ENCODE measurements at regions of chr1 and their contacts with region 1.

Region 1: GRCh38 chr1:150321826-150322166 is 463 bp downstream of the PRPF3 start:
- DNase-seq: no peak
- H3K4me3 ChIP-seq: peak overlapping the region; percentile 68 to 88 (median 68)
- H3K27ac ChIP-seq: peak overlapping the region; percentile 62
- H3K4me1 ChIP-seq: peaks cover 7% of the 10 kb centered on the region
- H3K27me3 ChIP-seq: no peaks in the 10 kb centered on the region
- CTCF ChIP-seq: no peak
- POLR2A ChIP-seq: no peak

Region 2: DNA sequence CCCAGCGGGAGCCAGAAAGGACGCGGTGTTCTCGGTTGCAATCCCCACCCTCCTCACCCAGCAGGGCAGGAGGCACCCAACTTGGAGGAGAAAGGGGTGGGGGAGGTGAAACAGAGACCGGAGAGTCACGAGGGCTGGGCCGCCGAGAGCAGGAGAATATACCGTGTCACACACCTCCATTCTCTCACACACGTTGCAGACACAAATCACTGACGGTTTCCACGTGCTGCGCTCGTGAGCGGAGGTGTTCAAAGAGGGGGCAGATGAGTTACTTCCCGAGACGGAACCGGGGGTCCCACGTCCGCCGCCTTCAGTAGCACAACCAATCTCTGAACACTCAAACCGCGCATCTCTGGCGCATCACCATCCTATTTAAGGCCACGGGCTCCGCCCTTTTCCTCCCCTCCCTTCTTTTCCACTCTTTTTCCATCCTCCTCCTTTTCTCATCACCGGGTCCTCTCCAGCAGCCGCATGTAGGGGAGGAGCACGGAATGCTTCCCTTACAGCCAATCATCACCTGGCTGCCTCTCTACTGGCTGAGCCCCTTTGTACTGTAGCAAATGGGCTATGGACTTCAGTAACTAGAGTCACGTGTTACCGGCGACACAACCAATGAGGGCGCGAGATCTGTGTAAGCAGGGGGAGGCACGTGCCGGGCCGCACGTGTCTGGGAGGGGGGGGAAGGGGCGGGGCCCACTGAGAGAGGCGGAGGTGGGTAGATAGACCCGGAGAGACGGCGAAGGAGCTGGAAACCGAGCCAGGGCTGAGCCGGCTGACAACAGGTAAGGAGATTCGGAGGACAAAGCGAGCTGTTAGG is 39.8 kb before region 1 on chr1 and contains the start of gene CIART:
- CTCF ChIA-PET with region 1: interaction called, 4 read pairs
- POLR2A ChIA-PET with region 1: no interaction called
- dilution Hi-C with region 1: no loop called
- intact Hi-C with region 1: loop called (anchors 1 kb)
- DNase-seq: peak; percentile 91
- H3K4me3 ChIP-seq: peak within 1 kb of the TSS; percentile 20 to 40 (median 29)
- H3K27ac ChIP-seq: no peak within 1 kb of the TSS
- H3K4me1 ChIP-seq: peaks cover 10% of the 10 kb centered on the region
- H3K27me3 ChIP-seq: peaks cover 0 to 8% of the 10 kb centered on the region in 2 experiments
- CTCF ChIP-seq: no peak
- POLR2A ChIP-seq: peak; percentile 44
- total RNA-seq, gene CIART: 1.0 and 2.4 TPM in 2 replicates

Region 3: DNA sequence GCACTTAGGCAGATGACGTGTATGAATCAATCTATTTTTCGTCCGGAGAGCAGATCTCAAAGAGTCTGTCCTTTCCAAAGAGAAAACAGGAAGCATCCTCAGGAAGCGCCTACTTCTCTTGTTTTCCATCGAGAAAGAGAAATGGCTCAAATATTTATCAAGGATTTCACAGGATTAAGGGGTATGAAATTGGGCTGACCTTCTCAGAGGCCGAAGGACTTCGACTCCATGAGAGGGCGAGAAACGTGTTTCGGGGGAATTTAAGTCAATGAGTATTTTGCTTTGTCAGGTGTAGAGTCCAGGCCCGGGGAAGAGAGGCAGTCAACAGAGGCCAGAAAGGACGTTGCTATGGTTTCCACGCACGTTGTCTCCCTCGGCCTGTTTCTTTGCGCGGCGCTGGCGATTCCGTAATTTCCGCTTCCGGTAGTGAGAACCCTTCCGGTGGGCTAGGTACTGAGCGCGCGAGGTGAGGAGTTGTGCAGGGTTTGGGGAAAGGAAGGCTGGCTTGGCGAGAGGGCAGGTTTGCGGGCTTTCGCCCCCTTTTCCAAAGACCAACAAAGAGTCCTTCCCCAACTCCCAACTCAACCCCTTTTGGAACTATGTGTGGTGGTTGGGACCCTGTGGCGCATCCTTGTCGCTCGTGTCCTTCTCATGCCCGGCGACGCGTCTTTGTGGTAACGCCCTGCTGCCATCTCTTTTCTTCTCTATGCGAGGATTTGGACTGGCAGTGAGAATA is 28.2 kb before region 1 on chr1 and contains the start of gene MRPS21:
- CTCF ChIA-PET with region 1: no interaction called
- POLR2A ChIA-PET with region 1: no interaction called
- dilution Hi-C with region 1: no loop called
- intact Hi-C with region 1: loop called (anchors 1 kb)
- DNase-seq: peak; percentile 94
- H3K4me3 ChIP-seq: peak within 1 kb of the TSS; percentile 25 to 90 (median 54)
- H3K27ac ChIP-seq: peak within 1 kb of the TSS; percentile 81
- H3K4me1 ChIP-seq: peaks cover 13% of the 10 kb centered on the region
- H3K27me3 ChIP-seq: no peaks in the 10 kb centered on the region
- CTCF ChIP-seq: no peak
- POLR2A ChIP-seq: peak; percentile 94
- total RNA-seq, gene MRPS21: 73.0 and 76.7 TPM in 2 replicates

Region 4: DNA sequence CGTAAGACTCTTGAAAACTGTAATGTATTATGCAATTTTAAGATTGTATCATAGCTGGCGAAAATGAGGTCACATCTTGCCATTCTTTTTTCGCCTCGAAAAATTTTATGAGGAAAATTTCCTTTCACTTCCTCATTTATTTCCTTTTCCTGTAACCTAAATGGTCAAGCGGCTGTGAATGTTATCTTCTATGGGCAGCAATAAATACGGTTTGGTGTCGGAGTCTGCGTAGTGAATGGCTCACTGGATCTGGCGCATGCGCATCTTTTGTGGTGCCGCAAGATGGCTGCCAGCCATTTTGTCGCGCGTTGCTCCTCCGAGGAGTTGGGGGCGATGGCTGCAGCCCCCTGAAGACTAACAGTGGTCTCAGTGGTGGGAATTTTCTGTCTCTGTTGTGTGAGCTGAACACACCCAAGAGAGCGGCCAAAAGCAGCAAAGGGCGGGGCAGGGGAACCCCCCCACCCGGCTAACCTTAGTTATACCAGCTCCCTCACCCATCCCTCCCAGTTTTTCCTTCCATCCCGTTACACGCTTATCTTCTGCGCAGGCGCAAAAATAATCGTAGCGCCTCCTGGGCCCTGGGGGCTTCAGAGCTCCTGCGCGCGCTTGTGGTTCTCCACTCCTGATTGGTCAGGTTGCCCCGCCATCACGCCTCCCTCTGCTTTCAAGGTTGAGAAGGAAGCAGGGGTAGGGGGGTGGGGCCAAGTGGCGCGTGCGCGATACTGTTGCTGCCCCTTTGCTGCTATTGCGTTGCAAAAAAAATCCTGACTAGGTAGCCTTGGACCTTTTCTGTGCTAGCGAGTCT is 41.8 kb after region 1 on chr1 and contains the start of gene RPRD2:
- CTCF ChIA-PET with region 1: no interaction called
- POLR2A ChIA-PET with region 1: no interaction called
- dilution Hi-C with region 1: no loop called
- intact Hi-C with region 1: loop called (anchors 2 kb)
- DNase-seq: peak; percentile 99
- H3K4me3 ChIP-seq: peak within 1 kb of the TSS; percentile 58 to 95 (median 84)
- H3K27ac ChIP-seq: peak within 1 kb of the TSS; percentile 75
- H3K4me1 ChIP-seq: peaks cover 18% of the 10 kb centered on the region
- H3K27me3 ChIP-seq: no peaks in the 10 kb centered on the region
- CTCF ChIP-seq: no peak
- POLR2A ChIP-seq: peak; percentile 97
- total RNA-seq, gene RPRD2: 23.9 and 24.5 TPM in 2 replicates